ENCODE measurements at regions of chr12 and their contacts with region 1.

Region 1: DNA sequence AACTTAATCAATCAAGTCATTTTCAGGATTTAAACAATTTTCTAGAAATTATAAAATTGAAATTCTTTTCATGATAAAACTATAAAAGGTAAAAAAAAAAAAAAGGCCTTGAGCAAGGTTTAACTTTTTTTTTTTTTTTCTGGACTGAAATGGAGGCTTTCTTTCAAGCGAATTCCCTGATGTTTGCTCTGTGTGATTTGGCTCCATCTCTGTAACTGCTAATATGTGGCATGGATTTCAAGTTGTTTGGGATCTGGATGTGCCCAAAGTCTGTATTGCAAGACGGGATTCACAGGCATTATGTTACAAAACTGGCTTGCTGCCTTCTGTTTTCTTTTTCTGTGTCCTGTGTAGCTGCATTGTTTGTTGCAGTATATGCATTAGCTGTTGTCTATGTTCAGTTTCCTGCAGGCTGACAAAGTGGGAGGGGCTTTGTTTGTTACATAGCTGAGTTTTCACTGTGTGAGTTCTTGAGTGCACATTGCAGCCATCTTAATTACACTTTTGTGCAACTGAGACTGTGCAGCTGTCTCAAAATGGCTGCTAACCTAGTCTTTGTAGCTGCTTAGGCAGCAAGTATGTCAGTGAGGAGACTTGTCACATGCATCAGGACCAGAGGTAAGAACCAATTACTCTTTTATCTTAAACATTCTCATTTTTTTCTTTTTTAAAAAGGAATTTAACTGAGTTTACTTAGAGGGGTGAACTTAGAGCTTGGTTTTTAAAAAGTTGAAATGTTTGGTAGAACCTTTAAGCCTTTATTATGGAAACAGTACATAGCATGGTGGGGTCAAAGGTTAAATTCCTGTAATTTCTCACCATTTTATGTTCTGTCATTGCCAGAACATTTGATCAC is 19.5 kb downstream of the ATF7IP start:
- DNase-seq: peak; percentile 85
- H3K4me3 Mint-ChIP-seq: peak overlapping the region; percentile 78
- H3K27ac Mint-ChIP-seq: peak overlapping the region; percentile 92
- H3K4me1 Mint-ChIP-seq: peaks cover 54% of the 10 kb centered on the region
- H3K27me3 Mint-ChIP-seq: no peaks in the 10 kb centered on the region

Region 2: DNA sequence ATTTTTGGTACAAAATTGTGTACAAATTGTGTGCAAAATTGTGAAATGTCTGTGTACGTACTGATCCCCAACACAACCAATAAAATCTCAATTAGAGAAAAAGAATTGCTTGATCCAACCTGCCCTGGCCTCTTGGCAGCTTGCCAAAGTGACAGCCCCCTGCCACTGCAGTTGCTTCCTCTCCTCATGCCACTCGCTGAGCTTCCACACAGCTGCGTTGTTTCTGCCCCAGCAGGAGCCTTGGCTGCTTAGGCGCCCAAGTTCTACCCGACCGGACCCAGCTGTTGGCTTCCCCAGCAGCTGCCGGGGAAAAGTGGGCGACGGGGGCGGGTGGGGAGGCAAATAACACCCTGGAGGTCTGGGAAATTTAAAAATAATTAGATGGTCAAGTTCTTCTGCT is 191.4 kb before region 1 on chr12:
- CTCF ChIA-PET with region 1: no interaction called
- POLR2A ChIA-PET with region 1: no interaction called
- DNase-seq: no peak
- H3K4me3 Mint-ChIP-seq: no peak overlapping the region
- H3K27ac Mint-ChIP-seq: no peak overlapping the region
- H3K4me1 Mint-ChIP-seq: no peaks in the 10 kb centered on the region
- H3K27me3 Mint-ChIP-seq: peaks cover 2% of the 10 kb centered on the region

Region 3: DNA sequence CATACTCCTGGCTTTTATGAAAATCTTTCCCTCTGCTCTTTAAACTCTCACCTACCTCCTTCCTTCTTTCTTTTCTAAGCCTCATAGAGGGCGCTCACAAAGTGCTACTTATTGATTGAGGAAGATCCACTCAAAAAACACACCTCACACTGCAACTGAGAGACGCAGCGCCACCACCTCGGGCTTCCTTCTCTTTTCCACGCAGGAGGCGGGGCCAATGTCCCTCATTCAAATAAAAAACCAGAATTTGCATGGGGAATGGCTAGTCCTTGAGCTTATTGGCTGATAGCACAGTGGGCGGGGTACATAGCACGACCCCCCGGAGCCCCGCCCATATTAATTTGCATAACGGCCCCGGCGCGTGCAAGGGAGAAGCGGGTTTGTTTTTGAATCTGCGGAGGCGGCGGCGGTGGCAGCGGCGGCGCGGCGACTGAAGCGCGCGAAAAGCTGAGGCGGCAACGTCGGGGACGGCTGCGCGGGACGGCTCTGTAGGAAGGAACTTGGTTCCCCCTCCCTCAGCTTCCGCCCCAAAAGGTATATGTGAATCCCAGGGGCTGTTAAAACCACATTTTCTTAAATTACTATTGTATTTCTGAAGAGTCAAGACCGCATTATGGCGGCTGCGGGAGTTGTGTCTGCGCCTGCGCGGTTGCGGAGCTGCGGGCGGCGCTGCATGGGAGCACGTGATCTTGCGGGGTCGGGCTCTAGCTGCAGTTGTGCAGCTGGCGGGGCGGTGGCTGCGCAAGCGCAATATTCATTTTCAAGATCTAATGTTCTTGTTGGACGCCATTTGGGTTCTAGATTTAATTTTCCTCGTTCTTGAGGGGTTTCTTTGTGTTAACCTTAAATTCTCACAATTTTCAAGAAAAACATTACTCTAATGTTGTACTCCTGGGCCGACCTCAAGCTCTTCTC is 19.5 kb before region 1 on chr12 and contains the start of gene ATF7IP:
- CTCF ChIA-PET with region 1: interaction called, 9 read pairs
- POLR2A ChIA-PET with region 1: interaction called, 34 read pairs
- DNase-seq: peak; percentile 98
- H3K4me3 Mint-ChIP-seq: peak within 1 kb of the TSS; percentile 90
- H3K27ac Mint-ChIP-seq: peak within 1 kb of the TSS; percentile 99
- H3K4me1 Mint-ChIP-seq: peaks cover 28% of the 10 kb centered on the region
- H3K27me3 Mint-ChIP-seq: no peaks in the 10 kb centered on the region
- total RNA-seq, gene ATF7IP: 96.7 to 108 TPM

Region 4: GRCh38 chr12:14373217-14373616 is 11.8 kb before region 1 on chr12:
- CTCF ChIA-PET with region 1: interaction called, 10 read pairs
- POLR2A ChIA-PET with region 1: interaction called, 5 read pairs
- DNase-seq: no peak
- H3K4me3 Mint-ChIP-seq: no peak overlapping the region
- H3K27ac Mint-ChIP-seq: no peak overlapping the region
- H3K4me1 Mint-ChIP-seq: peaks cover 48% of the 10 kb centered on the region
- H3K27me3 Mint-ChIP-seq: no peaks in the 10 kb centered on the region

Region 5: GRCh38 chr12:14443531-14443930 is 58.5 kb after region 1 on chr12:
- CTCF ChIA-PET with region 1: no interaction called
- POLR2A ChIA-PET with region 1: no interaction called
- DNase-seq: no peak
- H3K4me3 Mint-ChIP-seq: no peak overlapping the region
- H3K27ac Mint-ChIP-seq: no peak overlapping the region
- H3K4me1 Mint-ChIP-seq: peaks cover 2% of the 10 kb centered on the region
- H3K27me3 Mint-ChIP-seq: no peaks in the 10 kb centered on the region